Dorsolateral prefrontal cortex (tissue), 120 donors: ENCODE measurements at regions of chr5 and their contacts with region 1.

Region 1: GRCh38 chr5:80487829-80488721 is at the start of gene FAM151B:
- DNase-seq: peak; percentile 64 to 93 (median 84)
- H3K4me3 ChIP-seq: peak within 1 kb of the TSS; percentile 51 to 94 (median 80)
- H3K27ac ChIP-seq: peak within 1 kb of the TSS in 57 of 59 donors; percentile 18 to 88 (median 77)
- H3K27me3 ChIP-seq: no peaks in the 10 kb centered on the region
- CTCF ChIP-seq: peak in 47 of 56 donors; percentile 8 to 64 (median 39)
- total RNA-seq, gene FAM151B: 2.8 to 11.6 (median 6.4) TPM

Region 2: DNA sequence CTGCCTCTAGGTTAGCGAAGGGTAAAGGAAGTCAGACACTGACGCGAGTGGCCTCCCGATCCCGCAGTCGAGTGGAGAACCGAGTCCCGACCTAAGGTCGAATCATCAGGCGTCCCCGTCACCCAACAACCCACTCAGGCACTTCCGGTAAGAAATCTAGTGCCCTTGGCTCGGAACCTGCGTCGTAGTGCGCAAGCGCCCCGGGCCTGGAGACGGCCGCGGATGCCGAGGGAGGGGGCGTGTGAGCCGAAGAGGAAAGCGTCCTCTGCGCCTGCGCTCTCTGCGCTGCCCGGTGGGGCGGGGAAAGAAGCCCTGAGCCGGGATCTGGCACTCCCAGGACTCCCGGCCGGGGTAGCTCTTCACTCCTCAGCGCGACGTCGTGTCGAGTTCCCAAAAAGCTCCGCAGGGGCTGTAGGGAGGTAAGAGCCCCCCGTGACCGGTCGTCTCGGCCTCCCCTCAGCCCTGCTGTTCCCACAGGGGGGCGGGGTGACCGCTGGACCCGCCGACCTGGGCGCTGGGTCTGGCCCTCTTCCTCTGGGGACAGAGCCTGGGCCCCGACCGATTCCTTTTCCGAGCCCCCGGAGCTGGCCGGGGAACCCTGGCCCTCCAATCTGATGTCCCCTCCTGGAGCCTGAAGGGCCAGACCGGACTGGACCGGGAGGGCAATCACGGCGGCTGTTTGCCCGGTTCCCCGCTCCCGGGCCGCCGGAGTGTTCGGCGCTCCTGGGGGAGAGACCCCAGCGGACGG is 80.2 kb before region 1 on chr5 and contains the start of gene ZFYVE16:
- intact Hi-C with region 1: loop called (anchors 5 kb)
- DNase-seq: peak; percentile 95 to 98 (median 98)
- H3K4me3 ChIP-seq: peak within 1 kb of the TSS; percentile 63 to 100 (median 92)
- H3K27ac ChIP-seq: peak within 1 kb of the TSS; percentile 88 to 100 (median 99)
- H3K27me3 ChIP-seq: no peaks in the 10 kb centered on the region
- CTCF ChIP-seq: peak in 28 of 56 donors; percentile 4 to 54 (median 31)
- total RNA-seq, gene ZFYVE16: 59.0 to 215 (median 92.5) TPM

Region 3: DNA sequence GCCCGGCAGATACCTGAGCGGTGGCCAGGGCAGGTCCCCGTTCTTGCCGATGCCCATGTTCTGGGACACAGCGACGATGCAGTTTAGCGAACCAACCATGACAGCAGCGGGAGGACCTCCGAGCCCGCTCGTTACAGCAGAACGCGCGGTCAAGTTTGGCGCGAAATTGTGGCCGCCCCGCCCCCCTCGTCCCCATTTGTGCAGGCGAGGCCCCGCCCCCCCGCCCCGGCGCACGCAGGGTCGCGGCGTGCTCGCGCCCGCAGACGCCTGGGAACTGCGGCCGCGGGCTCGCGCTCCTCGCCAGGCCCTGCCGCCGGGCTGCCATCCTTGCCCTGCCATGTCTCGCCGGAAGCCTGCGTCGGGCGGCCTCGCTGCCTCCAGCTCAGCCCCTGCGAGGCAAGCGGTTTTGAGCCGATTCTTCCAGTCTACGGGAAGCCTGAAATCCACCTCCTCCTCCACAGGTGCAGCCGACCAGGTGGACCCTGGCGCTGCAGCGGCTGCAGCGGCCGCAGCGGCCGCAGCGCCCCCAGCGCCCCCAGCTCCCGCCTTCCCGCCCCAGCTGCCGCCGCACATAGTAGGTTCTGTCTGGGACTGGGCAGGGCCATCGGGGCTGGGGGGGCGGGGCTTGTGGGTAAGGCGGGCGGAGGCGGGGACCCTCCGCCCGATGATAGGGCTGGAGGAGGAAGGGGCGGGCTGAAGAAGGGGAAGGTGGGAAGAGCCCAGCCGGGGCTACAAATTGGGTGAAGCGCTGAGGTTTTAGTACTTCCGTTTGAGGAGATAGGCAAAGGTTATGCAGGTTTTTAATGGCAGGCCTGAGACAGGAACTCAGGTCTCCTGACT is 166.5 kb after region 1 on chr5 and contains the starts of genes DHFR and MSH3:
- intact Hi-C with region 1: loop called (anchors 5 kb)
- DNase-seq: peak; percentile 74 to 85 (median 81)
- H3K4me3 ChIP-seq: peak within 1 kb of the TSS; percentile 39 to 98 (median 87)
- H3K27ac ChIP-seq: peak within 1 kb of the TSS in 57 of 59 donors; percentile 61 to 99 (median 94)
- H3K27me3 ChIP-seq: no peaks in the 10 kb centered on the region
- CTCF ChIP-seq: peak in 30 of 56 donors; percentile 4 to 56 (median 27)
- total RNA-seq, gene DHFR: 8.3 to 36.3 (median 16.7) TPM
- total RNA-seq, gene MSH3: 15.6 to 28.3 (median 21.3) TPM

Region 4: DNA sequence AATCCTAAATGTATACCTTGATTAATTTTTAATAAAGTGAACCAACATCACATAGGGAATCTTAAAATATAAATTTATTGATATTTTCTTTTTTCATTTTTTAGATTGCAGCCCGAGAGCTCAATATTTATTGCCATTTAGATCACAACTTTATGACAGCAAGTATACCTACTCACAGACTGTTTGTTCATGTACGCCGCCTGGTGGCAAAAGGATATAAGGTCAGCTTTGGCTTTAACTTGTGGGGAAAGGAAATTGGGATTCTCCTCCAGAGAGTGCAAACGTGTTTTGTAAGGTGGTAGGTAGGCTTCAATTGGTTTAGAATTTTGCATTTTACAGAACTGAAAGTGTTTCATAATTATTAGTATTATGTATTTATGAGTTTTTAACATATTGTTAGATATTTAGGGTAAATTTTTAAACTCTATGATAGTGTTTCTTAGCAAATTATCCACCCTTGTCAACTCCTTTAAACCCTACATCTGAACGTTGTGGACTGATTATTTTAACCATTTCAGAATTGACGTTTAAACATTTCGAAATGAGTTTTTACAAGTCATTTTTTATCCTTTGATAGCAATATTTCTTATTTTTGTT is 184.2 kb after region 1 on chr5:
- intact Hi-C with region 1: loop called in 1 of 2 experiments (anchors 5 kb)
- DNase-seq: peak in 8 of 10 donors; percentile 44 to 81 (median 61)
- H3K4me3 ChIP-seq: no peak overlapping the region
- H3K27ac ChIP-seq: no peak overlapping the region
- H3K27me3 ChIP-seq: no peaks in the 10 kb centered on the region
- CTCF ChIP-seq: peak; percentile 60 to 88 (median 78)

Region 5: GRCh38 chr5:80809451-80809850 is 321.4 kb after region 1 on chr5:
- intact Hi-C with region 1: no loop called
- DNase-seq: no peak
- H3K4me3 ChIP-seq: no peak overlapping the region
- H3K27ac ChIP-seq: no peak overlapping the region
- H3K27me3 ChIP-seq: no peaks in the 10 kb centered on the region
- CTCF ChIP-seq: no peak

Region 6: DNA sequence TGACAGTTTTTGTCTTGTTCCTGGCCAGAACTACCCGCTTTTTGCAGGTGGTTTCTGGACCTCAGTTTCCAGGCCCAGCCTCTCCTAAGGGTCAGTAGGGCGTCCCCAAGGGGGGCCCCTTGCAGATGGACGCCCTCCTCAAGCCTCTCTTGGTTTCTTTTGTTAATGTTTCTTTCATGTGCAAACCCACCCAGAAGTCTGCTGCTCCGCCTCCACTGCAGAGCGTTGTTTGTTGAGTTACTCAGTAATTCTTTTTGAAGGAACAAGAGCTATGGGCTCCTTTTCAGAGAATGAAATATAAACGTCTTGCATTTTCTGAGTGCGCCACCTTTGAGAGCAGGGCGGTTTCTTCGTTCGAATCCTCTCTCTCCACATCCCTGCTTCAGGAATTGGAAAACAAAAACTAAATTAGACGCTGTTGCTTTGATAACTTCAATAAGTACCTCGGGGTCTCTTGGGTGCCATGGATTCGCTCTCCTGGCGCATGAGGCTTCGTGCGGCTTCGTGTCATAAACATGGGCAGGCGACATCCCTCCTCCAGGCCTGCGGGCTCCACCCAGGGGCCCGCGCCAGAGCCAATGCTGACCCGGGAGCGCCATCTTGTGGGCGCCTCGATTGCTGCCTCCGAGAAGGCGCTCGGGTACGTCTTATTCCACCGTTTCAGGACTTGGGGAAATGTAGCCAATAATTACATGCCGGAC is 706.7 kb after region 1 on chr5:
- intact Hi-C with region 1: loop called in 1 of 2 experiments (anchors 10 kb)
- DNase-seq: peak; percentile 76 to 89 (median 83)
- H3K4me3 ChIP-seq: peak overlapping the region in 36 of 59 donors; percentile 0 to 42 (median 20)
- H3K27ac ChIP-seq: peak overlapping the region in 25 of 59 donors; percentile 2 to 73 (median 29)
- H3K27me3 ChIP-seq: no peaks in the 10 kb centered on the region
- CTCF ChIP-seq: peak; percentile 80 to 99 (median 95)